AG04450 (cell line): ENCODE measurements at regions of chr17 and their contacts with region 1.

Region 1: DNA sequence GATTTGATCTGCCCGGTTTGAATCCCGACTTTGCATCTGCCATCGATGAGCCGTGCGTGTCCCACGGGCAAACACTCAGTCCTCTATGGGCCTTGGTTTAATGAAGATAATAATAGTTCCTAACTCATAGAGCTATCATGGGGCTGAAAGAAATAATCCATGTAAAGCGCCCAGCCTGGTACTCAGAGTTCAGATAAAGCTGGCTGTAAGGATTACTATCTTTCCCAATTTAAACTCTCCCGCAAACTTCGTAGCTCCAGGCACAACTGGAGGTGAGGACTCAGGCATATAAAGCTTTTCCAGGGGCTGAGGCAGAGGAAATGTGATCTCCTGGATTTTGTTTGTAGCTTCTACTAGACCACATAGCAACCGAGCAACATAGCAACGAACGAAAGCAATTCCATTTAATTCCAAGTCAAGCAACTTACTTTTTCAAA is 16.3 kb downstream of the ALOX15 start:
- DNase-seq: no peak
- H3K4me3 ChIP-seq: no peak overlapping the region
- H3K27ac ChIP-seq: no peak overlapping the region
- H3K27me3 ChIP-seq: peaks cover 9% of the 10 kb centered on the region
- CTCF ChIP-seq: no peak

Region 2: GRCh38 chr17:4420692-4421131 is 204.5 kb before region 1 on chr17:
- CTCF ChIA-PET with region 1: interaction called, 14 read pairs
- POLR2A ChIA-PET with region 1: no interaction called
- DNase-seq: peak; percentile 36
- H3K4me3 ChIP-seq: no peak overlapping the region
- H3K27ac ChIP-seq: no peak overlapping the region
- H3K27me3 ChIP-seq: no peaks in the 10 kb centered on the region
- CTCF ChIP-seq: peak; percentile 85

Region 3: DNA sequence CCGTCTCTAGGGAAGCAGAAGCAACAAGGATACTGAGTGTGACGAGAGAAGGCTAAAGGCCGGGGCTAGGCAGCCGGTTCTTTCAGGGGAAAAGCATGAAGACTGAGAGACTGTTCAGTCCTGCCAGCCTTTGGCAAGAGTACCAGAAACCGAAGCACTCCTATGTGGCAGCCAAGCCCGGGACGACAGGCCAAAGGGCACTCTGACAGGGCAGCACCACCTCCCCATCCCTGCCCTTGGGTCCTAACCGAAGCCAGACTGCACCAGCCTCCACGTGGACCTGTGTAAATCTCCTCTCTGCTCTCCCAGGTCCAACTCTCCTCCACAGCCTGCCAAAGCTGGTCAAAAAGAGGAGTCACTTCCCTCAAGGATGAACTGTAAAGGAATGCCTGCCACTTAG is 39.8 kb after region 1 on chr17:
- CTCF ChIA-PET with region 1: no interaction called
- POLR2A ChIA-PET with region 1: no interaction called
- DNase-seq: no peak
- H3K4me3 ChIP-seq: no peak overlapping the region
- H3K27ac ChIP-seq: no peak overlapping the region
- H3K27me3 ChIP-seq: peaks cover 22% of the 10 kb centered on the region
- CTCF ChIP-seq: no peak